Right lobe of liver (tissue), 6 donors: ENCODE measurements at regions of chr2 and their contacts with region 1.

Region 1: GRCh38 chr2:231709981-231710798 is 1.9 kb downstream of the PTMA start:
- DNase-seq: peak; percentile 88 to 89 (median 89)
- ATAC-seq: peak; percentile 21 to 45 (median 35)
- H3K4me3 ChIP-seq: peak overlapping the region; percentile 71 to 97 (median 94)
- H3K27ac ChIP-seq: peak overlapping the region; percentile 91 to 100 (median 96)
- H3K4me1 ChIP-seq: peaks cover 0 to 27% (median 13%) of the 10 kb centered on the region in 4 donors
- H3K27me3 ChIP-seq: no peaks in the 10 kb centered on the region
- CTCF ChIP-seq: peak; percentile 77 to 99 (median 90)
- POLR2A ChIP-seq: peak; percentile 93

Region 2: GRCh38 chr2:231573698-231574421 is 136.3 kb before region 1 on chr2:
- intact Hi-C with region 1: no loop called
- DNase-seq: no peak
- ATAC-seq: peak in 1 of 4 donors; percentile 19
- H3K4me3 ChIP-seq: no peak overlapping the region
- H3K27ac ChIP-seq: no peak overlapping the region
- H3K4me1 ChIP-seq: no peaks in the 10 kb centered on the region
- H3K27me3 ChIP-seq: no peaks in the 10 kb centered on the region
- CTCF ChIP-seq: no peak
- POLR2A ChIP-seq: no peak

Region 3: GRCh38 chr2:231612179-231613053 is 97.8 kb before region 1 on chr2:
- intact Hi-C with region 1: loop called in 1 of 2 experiments (anchors 10 kb)
- DNase-seq: peak; percentile 85 to 88 (median 87)
- ATAC-seq: peak; percentile 68 to 82 (median 80)
- H3K4me3 ChIP-seq: no peak overlapping the region
- H3K27ac ChIP-seq: peak overlapping the region; percentile 15 to 87 (median 73)
- H3K4me1 ChIP-seq: peaks cover 0 to 18% (median 4%) of the 10 kb centered on the region in 4 donors
- H3K27me3 ChIP-seq: peaks cover 0 to 5% of the 10 kb centered on the region in 2 donors
- CTCF ChIP-seq: peak; percentile 88 to 91 (median 90)
- POLR2A ChIP-seq: no peak

Region 4: DNA sequence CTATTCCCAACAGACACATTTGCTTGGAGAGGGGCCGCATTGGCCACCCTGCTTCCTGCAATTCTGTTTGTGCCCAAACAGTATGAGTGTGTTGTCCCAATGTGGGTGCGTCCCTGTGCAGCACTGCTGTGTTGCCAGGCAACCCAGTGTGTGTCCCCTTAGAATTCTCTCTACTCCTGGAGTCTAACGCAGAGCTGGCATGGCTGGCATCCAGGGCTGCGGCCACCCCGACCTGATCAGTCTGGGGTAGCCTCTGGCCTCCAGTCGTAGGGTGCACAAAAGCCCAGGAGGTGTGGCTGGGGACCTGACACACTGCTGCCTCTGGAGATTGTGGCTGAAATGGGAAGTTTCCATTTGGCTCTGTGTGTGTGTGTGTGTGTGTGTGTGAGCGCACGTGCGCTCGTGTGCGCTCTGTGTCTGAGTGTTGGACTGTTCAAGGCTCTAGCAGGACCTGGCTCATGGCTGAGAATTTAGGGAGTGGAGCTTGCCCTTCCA is 69.5 kb before region 1 on chr2:
- intact Hi-C with region 1: no loop called
- DNase-seq: no peak
- ATAC-seq: peak; percentile 13 to 50 (median 32)
- H3K4me3 ChIP-seq: no peak overlapping the region
- H3K27ac ChIP-seq: peak overlapping the region in 1 of 3 donors; percentile 18
- H3K4me1 ChIP-seq: no peaks in the 10 kb centered on the region
- H3K27me3 ChIP-seq: no peaks in the 10 kb centered on the region
- CTCF ChIP-seq: no peak
- POLR2A ChIP-seq: no peak

Region 5: DNA sequence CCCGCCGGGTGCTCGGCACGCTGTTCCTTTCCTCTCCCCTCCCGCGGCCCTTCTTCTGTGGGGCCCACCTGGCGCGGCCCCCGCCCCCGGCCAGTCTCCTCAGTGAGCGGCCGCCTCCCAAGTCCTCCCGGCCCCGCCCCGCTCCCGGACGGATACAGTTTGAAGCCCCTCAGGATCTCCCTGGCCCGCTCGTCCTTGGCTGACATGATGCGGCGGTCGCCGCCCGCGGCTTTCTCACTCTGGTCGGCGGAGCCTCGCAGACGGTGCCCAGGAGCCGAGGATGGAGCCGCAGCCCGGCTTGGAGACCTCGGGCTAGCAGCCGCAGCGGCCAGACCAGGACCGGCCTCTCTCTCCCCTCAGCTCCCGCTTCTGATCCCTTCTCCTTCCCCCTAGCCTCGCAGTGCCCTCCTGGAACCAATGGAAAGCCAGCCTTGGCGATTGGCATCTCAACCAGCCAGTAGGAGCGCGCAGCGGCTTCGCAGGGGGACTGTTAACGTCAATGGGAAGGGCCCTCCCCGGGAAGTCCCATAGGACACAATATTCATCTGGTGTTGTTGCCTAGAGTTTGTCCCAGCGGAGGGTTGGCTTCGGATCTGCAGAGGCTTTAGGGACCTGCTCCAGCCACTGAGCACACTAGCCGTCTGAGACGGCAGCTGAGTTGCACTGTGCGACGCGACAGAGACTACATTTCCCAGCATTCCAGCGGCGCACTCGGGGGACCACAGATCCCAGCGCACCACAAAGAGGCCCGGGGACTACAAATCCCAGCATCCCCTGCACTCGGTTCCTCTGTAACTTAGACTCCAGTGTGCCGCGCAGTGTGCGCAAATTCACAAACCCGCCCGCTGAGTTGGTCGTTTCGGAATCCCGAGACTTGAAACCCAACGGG is 71.0 kb after region 1 on chr2 and contains the start of gene PDE6D:
- intact Hi-C with region 1: loop called in 1 of 2 experiments (anchors 10 kb)
- DNase-seq: peak; percentile 98 to 99 (median 99)
- ATAC-seq: peak; percentile 91 to 97 (median 94)
- H3K4me3 ChIP-seq: peak within 1 kb of the TSS; percentile 72 to 85 (median 81)
- H3K27ac ChIP-seq: peak within 1 kb of the TSS; percentile 71 to 90 (median 79)
- H3K4me1 ChIP-seq: peaks cover 0 to 20% (median 7%) of the 10 kb centered on the region in 4 donors
- H3K27me3 ChIP-seq: no peaks in the 10 kb centered on the region
- CTCF ChIP-seq: no peak
- POLR2A ChIP-seq: peak; percentile 94
- total RNA-seq, gene PDE6D: 7.1 to 10.4 (median 8.3) TPM

Region 6: DNA sequence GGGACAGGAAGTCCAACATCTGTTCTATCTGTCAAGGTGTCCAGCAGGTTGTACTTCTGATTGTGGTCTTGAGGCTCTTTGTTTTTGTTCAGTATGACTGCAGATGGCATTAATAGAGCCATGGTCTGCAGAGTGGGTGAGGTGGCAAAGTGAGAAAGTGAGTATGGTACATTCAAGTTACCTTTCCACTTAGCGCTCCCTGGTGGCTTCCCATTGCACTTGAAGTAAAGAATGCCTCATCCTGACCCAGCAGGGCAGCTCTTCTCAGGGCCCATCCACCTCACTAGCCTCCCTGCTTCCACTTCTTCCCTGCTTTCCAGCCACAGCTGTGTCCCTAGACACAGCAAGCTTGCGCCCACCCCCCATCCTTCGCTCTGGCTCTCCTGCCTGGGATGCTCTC is 520.4 kb after region 1 on chr2:
- intact Hi-C with region 1: no loop called
- DNase-seq: no peak
- ATAC-seq: peak in 2 of 4 donors; percentile 11 to 40
- H3K4me3 ChIP-seq: no peak overlapping the region
- H3K27ac ChIP-seq: no peak overlapping the region
- H3K4me1 ChIP-seq: peaks cover 0 to 4% (median 0%) of the 10 kb centered on the region in 4 donors
- H3K27me3 ChIP-seq: no peaks in the 10 kb centered on the region
- CTCF ChIP-seq: peak in 1 of 4 donors; percentile 28
- POLR2A ChIP-seq: no peak

Region 7: GRCh38 chr2:232333361-232334270 is 623.4 kb after region 1 on chr2:
- intact Hi-C with region 1: no loop called
- DNase-seq: peak in 2 of 3 donors; percentile 42 to 54
- ATAC-seq: no peak
- H3K4me3 ChIP-seq: no peak overlapping the region
- H3K27ac ChIP-seq: no peak overlapping the region
- H3K4me1 ChIP-seq: no peaks in the 10 kb centered on the region
- H3K27me3 ChIP-seq: no peaks in the 10 kb centered on the region
- CTCF ChIP-seq: peak in 3 of 4 donors; percentile 16 to 33 (median 22)
- POLR2A ChIP-seq: no peak